Aorta (tissue), 5 donors: ENCODE measurements at regions of chr2 and their contacts with region 1.

Region 1: GRCh38 chr2:160493227-160494028 is at the start of gene RBMS1:
- DNase-seq: peak; percentile 69 to 87
- ATAC-seq: peak; percentile 73
- H3K4me3 ChIP-seq: peak within 1 kb of the TSS; percentile 44 to 75
- H3K27ac ChIP-seq: peak within 1 kb of the TSS; percentile 72 to 82
- H3K4me1 ChIP-seq: peaks cover 0 to 2% of the 10 kb centered on the region in 2 donors
- H3K27me3 ChIP-seq: no peaks in the 10 kb centered on the region
- total RNA-seq, gene RBMS1: 119 to 146 TPM

Region 2: DNA sequence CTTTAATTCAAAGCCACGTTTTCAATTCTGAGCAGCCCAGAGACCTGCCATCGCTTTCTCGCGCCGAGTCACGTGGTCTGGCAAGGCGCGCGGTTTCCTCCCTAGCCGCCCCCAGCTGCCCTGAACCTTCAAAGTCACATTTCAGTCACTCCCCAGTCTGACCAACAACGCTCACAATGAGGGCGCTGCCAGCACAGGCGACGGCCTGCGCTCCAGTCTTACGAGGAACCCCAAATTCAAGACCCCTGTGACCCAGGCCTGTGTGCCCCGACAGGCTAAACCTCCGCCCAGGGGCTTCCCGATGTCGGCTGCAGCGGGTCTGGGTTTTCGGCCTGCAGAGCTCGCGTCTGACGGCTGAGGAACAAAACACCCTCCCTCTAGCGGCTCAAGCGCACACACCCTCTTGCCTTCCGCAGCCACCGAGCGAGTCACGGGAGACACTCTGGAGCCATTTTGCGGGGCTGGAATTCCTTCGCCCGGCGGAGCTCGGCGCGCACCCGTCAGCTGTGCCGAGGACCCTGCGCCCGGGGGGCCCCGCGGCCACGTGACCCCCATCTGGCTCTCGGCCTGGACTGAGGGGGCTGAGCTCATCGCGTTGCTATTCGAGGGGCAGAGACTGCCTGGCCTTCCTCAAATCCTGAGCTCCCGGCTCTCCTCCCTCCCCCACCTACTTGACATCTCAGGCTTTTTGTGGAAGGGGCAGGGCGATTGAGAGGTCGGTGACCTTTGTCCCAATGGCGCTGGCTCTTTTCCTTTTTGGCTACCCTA is 223.4 kb before region 1 on chr2:
- intact Hi-C with region 1: loop called in 1 of 2 experiments (anchors 1 kb)
- DNase-seq: peak; percentile 92 to 96
- ATAC-seq: peak; percentile 94
- H3K4me3 ChIP-seq: peak overlapping the region; percentile 29 to 36
- H3K27ac ChIP-seq: peak overlapping the region; percentile 92 to 93
- H3K4me1 ChIP-seq: no peaks in the 10 kb centered on the region
- H3K27me3 ChIP-seq: no peaks in the 10 kb centered on the region

Region 3: GRCh38 chr2:160332318-160332717 is 161.1 kb before region 1 on chr2:
- intact Hi-C with region 1: loop called (anchors 10 kb)
- DNase-seq: no peak
- ATAC-seq: peak; percentile 45
- H3K4me3 ChIP-seq: no peak overlapping the region
- H3K27ac ChIP-seq: no peak overlapping the region
- H3K4me1 ChIP-seq: peaks cover 5 to 14% of the 10 kb centered on the region in 2 donors
- H3K27me3 ChIP-seq: no peaks in the 10 kb centered on the region

Region 4: GRCh38 chr2:160582490-160583145 is 89.2 kb after region 1 on chr2:
- intact Hi-C with region 1: loop called in 1 of 2 experiments (anchors 5 kb)
- DNase-seq: peak in 1 of 2 donors; percentile 62
- ATAC-seq: no peak
- H3K4me3 ChIP-seq: no peak overlapping the region
- H3K27ac ChIP-seq: no peak overlapping the region
- H3K4me1 ChIP-seq: peaks cover 0 to 2% of the 10 kb centered on the region in 2 donors
- H3K27me3 ChIP-seq: no peaks in the 10 kb centered on the region

Region 5: DNA sequence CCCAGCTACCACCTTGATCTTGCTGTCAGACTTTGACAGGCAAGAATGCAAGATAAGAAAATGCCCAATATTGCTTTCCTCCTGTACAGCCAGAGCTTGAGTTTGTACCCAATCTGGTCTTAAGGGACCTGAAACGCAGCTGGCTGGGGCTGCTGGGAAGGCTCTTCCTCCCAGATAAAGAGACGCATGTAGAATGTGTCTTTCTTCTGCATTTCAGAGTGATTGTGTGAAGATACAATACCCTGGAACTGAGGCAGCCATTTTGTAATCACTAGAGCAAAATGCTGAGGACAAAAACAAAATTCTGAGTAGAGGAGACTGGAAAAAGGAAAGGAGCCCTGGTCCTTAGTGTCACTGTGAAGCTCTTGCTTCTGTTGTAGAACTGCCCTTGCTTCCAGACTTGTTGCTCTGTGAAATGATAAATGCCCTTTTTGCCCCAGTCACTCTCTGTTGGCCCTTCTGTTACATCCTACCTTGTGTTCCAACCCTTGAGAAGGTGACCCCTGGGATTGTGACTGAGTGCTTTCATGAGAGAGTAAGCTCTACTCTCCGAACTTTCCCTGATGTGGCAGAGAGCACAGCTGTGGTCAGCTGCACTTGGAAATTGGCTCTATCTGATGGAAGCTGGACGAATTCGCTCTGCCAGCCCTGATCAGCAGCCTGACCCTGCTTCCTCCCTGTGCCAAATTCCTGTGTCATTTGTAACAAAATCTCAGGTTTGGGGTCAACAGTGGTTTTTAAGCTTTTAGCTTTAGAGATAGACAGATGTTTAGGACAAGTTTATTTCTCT is 137.6 kb after region 1 on chr2:
- intact Hi-C with region 1: no loop called
- DNase-seq: peak in 1 of 2 donors; percentile 49
- ATAC-seq: peak; percentile 59
- H3K4me3 ChIP-seq: no peak overlapping the region
- H3K27ac ChIP-seq: no peak overlapping the region
- H3K4me1 ChIP-seq: peaks cover 0 to 4% of the 10 kb centered on the region in 2 donors
- H3K27me3 ChIP-seq: no peaks in the 10 kb centered on the region

Region 6: GRCh38 chr2:160970052-160970965 is 476.9 kb after region 1 on chr2:
- intact Hi-C with region 1: loop called in 1 of 2 experiments (anchors 10 kb)
- DNase-seq: no peak
- ATAC-seq: peak; percentile 89
- H3K4me3 ChIP-seq: peak overlapping the region in 1 of 2 donors; percentile 54
- H3K27ac ChIP-seq: no peak overlapping the region
- H3K4me1 ChIP-seq: no peaks in the 10 kb centered on the region
- H3K27me3 ChIP-seq: no peaks in the 10 kb centered on the region